GM10248 (cell line): ENCODE measurements at regions of chr10 and their contacts with region 1.

Region 1: GRCh38 chr10:52688899-52689298 is 83.7 kb downstream of the MBL2 start:
- DNase-seq: no peak
- CTCF ChIP-seq: no peak

Region 2: GRCh38 chr10:52703898-52704297 is 15.0 kb after region 1 on chr10:
- CTCF ChIA-PET with region 1: interaction called, 12 read pairs
- POLR2A ChIA-PET with region 1: no interaction called
- DNase-seq: no peak
- CTCF ChIP-seq: no peak

Region 3: GRCh38 chr10:52740913-52741675 is 52.2 kb after region 1 on chr10:
- CTCF ChIA-PET with region 1: no interaction called
- POLR2A ChIA-PET with region 1: no interaction called
- DNase-seq: peak; percentile 47
- CTCF ChIP-seq: peak; percentile 86